Activated CD4-positive, alpha-beta T cell treated with anti-CD3 and anti-CD28 coated beads, Interleukin-2, amount 10 ng/mL, durations not matched to agents 24 days and 14 days (primary cell): ENCODE measurements at regions of chr18 and their contacts with region 1.

Region 1: DNA sequence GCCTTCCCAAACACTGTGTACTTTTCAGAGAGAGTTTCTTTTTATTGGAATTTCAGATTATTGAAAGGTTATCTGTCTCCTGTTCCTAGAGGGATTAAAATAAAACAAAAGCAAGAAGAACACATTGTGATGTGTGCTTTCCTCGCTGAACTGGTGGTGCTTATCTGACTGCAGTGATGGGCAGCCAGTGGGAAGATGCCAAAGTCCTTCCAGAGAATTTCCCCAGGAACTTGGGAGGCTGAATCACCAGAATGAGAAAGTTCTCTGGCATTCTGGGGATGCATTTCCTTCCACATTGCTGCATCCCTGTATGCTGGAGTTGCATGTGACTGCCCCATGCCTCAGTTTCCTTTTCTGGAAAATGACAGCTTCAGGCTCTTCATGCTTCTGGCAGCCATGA is 53.9 kb upstream of the SEC11C start:
- DNase-seq: no peak
- H3K4me3 Mint-ChIP-seq: no peak overlapping the region
- H3K27ac Mint-ChIP-seq: no peak overlapping the region
- H3K4me1 Mint-ChIP-seq: peaks cover 5% of the 10 kb centered on the region
- H3K27me3 Mint-ChIP-seq: peaks cover 14% of the 10 kb centered on the region

Region 2: DNA sequence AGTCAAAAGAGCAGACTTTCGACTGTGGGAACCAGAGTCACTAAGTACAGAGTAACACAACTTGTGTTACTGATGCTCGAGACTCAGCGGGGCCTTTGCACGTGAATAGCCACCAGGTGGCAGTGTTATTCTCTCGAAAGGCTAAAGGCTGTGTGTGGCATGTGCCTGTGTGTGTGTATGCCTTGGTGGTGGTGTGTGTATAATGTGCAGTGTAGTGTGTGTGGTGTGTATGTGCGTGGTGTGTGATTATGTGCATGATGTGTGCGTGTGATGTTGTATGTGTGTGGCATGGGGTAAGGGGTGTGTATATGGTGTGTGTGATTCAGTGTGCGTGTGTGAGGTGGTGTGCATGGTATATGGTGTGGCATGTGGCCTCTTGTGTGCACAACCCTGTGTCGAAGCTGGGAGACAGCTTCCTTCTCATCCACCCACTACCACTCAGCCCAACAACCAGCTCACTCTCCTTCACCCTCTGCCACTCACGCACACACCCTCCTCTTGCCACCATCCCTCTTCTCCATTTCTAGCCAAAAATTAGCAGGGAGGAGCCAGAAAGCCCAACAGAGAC is 304.1 kb before region 1 on chr18:
- intact Hi-C with region 1: no loop called
- DNase-seq: peak; percentile 90
- H3K4me3 Mint-ChIP-seq: no peak overlapping the region
- H3K27ac Mint-ChIP-seq: no peak overlapping the region
- H3K4me1 Mint-ChIP-seq: peaks cover 3% of the 10 kb centered on the region
- H3K27me3 Mint-ChIP-seq: peaks cover 9% of the 10 kb centered on the region

Region 3: DNA sequence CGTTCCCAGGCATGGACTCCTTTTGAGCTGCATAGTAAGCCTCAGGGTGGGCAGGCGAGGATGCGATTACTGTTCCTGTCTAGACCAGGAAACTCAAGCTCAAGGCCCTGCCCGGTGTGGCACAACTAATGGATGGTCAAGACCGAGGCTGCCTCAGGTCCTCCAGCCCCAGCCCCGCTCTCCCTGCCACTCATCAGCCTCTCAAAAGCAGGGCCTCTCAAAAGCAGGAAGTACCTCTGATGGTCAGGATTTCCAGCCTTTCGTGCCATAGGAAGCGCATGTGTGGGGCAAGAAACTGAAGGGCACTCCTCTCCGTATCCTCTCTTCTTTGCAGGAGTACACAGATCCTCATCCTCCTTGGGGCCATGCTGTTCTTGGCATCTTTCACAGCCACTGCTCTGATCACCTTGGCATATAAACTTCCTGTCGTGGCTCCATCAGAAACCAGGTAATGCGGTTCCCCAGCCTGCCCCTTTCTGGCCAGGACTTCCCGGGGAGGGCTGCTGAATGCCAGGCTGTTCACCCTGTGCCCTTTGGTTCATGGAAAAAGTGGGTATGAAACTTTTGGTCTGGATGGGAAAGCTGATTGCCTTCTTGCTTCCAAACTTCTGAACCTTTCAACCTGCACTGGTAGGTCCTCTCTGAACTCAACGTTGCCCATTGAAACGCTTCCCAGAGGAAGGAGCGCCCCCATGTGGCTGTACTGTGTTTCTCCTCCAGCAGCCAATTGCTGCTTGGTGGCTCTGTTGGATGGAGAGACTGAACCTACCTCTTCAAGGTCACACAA is 28.9 kb before region 1 on chr18:
- intact Hi-C with region 1: no loop called
- DNase-seq: peak; percentile 86
- H3K4me3 Mint-ChIP-seq: no peak overlapping the region
- H3K27ac Mint-ChIP-seq: no peak overlapping the region
- H3K4me1 Mint-ChIP-seq: no peaks in the 10 kb centered on the region
- H3K27me3 Mint-ChIP-seq: peaks cover 6% of the 10 kb centered on the region

Region 4: DNA sequence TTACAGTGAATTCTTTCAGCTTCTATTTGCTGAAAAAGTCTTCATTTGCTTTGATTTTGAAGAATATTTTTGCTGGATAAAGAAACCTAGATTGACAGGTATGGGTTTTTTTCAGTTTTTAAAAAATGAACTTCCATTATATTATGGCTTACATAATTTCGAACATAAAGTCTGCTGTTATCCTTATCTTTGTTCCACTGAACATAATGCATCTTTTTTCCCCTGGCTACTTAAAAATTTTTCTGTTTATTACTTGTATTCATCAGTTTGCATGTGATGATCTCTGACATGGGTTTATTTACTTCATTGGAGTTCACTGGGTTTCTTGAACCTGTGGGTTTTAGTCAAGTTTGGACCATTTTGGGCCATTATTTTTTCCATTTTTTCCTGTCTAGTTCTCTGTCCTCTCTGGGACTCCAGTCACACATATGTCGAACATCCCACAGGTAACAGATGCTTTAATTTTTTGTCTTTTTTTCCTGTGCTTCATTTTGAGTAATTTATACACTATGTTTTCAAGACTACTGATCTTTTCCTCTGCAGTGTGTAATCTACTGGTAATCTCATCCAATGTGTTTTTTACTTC is 87.0 kb after region 1 on chr18:
- intact Hi-C with region 1: loop called (anchors 10 kb)
- DNase-seq: no peak
- H3K4me3 Mint-ChIP-seq: no peak overlapping the region
- H3K27ac Mint-ChIP-seq: no peak overlapping the region
- H3K4me1 Mint-ChIP-seq: no peaks in the 10 kb centered on the region
- H3K27me3 Mint-ChIP-seq: peaks cover 6% of the 10 kb centered on the region

Region 5: GRCh38 chr18:59220784-59221765 is 135.3 kb after region 1 on chr18:
- intact Hi-C with region 1: loop called (anchors 10 kb)
- DNase-seq: no peak
- H3K4me3 Mint-ChIP-seq: no peak overlapping the region
- H3K27ac Mint-ChIP-seq: no peak overlapping the region
- H3K4me1 Mint-ChIP-seq: peaks cover 2% of the 10 kb centered on the region
- H3K27me3 Mint-ChIP-seq: peaks cover 78% of the 10 kb centered on the region